Left lung (tissue), 14 donors: ENCODE measurements at regions of chr1 and their contacts with region 1.

Region 1: DNA sequence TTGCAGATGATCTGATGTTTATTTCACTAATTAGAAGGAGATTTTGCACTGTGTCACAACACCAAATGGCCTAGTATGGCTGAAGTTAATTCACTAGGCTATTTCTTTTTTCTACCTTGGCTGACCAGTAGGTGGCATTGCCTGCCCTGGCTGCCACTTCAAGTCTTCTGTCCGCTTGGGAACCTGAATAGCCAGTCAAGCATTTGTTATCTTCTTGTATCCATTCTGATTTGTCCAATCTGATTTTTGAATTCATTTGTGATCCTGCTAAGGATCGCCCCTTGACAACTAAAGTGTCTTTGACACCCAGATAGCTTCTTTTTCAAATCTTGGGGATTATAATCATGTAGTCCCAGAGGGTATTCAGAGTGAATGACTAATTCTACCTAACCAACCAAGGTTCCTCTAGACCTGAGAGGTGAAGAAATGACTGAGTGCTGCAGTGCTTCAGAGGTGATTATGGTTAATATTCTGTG is 99.4 kb downstream of the GIPC2 start:
- DNase-seq: peak in 3 of 4 donors; percentile 26 to 64 (median 37)
- ATAC-seq: peak; percentile 88
- H3K4me3 ChIP-seq: no peak overlapping the region
- H3K27ac ChIP-seq: no peak overlapping the region
- H3K4me1 ChIP-seq: peaks cover 0 to 4% of the 10 kb centered on the region in 2 donors
- H3K27me3 ChIP-seq: no peaks in the 10 kb centered on the region
- CTCF ChIP-seq: peak; percentile 54 to 82

Region 2: DNA sequence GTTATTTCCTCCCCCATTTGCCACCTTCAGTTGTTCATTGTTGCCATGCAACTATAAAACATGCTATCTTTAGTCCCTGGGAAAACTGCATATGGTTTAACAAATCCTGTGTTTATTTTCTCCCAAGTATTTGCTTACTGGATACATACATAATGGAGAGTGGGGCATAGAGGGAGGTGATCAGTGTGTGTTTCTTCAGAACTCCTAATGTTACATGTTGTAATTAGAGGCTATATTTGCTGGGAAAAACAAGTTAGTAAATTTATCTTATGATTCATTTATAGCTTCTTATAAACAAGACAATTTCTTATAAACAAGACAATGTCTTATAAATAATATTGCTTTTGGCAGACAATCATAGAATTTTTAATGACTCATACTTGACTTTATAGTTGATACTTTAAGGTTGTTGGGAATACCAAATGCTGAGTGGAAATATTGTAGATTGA is 106.6 kb before region 1 on chr1:
- intact Hi-C with region 1: no loop called
- DNase-seq: peak in 1 of 4 donors; percentile 26
- ATAC-seq: peak; percentile 56
- H3K4me3 ChIP-seq: no peak overlapping the region
- H3K27ac ChIP-seq: peak overlapping the region; percentile 8 to 58
- H3K4me1 ChIP-seq: no peaks in the 10 kb centered on the region
- H3K27me3 ChIP-seq: no peaks in the 10 kb centered on the region
- CTCF ChIP-seq: no peak

Region 3: GRCh38 chr1:78577257-78578100 is 432.3 kb after region 1 on chr1:
- intact Hi-C with region 1: no loop called
- DNase-seq: no peak
- ATAC-seq: no peak
- H3K4me3 ChIP-seq: no peak overlapping the region
- H3K27ac ChIP-seq: no peak overlapping the region
- H3K4me1 ChIP-seq: no peaks in the 10 kb centered on the region
- H3K27me3 ChIP-seq: no peaks in the 10 kb centered on the region
- CTCF ChIP-seq: no peak

Region 4: DNA sequence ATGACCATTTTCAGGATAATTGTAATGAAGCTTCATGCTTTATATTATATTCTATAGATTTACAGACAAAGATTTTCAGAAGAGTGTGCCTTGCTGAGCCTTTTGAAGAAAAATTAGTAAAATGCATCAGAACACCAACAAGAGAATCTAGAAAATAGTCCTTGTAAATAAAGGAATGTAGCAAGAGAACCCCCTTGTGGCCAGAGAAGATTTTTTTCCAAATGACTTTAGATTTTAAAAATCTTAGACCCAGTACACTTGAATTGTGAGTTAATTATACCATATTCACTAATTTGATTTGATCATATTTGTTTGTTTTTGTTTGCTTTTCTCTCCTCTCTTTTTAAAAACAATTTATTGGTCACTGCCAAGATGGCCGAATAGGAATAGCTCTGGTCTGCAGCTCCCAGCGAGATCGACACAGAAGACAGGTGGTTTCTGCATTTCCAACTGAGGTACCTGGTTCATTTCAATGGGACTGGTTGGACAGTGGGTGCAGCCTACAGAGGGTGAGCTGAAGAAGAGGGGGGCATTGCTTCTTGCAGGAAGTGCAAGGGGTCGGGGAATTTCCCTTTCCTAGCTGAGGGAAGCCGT is 462.3 kb after region 1 on chr1:
- intact Hi-C with region 1: loop called in 1 of 2 experiments (anchors 5 kb)
- DNase-seq: peak in 1 of 4 donors; percentile 21
- ATAC-seq: peak; percentile 64
- H3K4me3 ChIP-seq: no peak overlapping the region
- H3K27ac ChIP-seq: no peak overlapping the region
- H3K4me1 ChIP-seq: no peaks in the 10 kb centered on the region
- H3K27me3 ChIP-seq: no peaks in the 10 kb centered on the region
- CTCF ChIP-seq: peak; percentile 38 to 61